Endothelial cell of umbilical vein (primary cell): ENCODE measurements at regions of chr11 and their contacts with region 1.

Region 1: DNA sequence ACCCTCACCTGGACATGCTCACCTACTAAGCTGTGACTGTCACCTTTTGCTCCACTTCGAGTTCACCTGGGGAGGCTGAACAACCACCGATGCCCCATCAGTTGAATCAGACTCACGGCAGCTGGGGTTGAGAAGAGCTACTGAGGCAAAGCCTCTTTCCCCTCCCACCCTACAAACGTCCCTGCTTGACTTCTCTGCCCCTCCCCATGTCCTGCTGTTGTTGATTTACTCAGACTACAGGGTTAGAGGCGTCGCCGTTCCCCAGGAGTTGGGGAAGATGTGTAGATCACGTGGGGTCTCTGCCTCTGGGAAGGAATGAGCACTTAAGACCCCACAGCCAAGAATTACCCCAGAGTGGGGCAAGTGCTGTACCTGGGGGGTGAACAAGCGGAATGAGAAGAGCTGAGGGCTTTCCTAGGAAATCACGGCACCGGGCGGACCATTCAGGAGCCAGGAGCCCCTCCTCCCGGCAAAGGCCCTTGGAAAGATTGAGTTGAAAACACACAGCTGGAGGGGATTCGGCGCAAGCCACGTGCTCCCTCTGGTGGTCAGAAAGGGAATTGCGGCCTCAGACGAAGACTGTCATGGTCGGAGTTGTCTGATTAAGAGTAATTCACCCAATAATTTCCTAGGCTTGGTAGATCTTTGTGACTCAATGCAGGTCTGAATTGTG is 7.0 kb downstream of the FXYD2 start:
- DNase-seq: peak; percentile 88
- H3K4me3 ChIP-seq: no peak overlapping the region
- H3K27ac ChIP-seq: peak overlapping the region; percentile 65
- H3K4me1 ChIP-seq: peaks cover 15% of the 10 kb centered on the region
- H3K27me3 ChIP-seq: peaks cover 0 to 1% of the 10 kb centered on the region in 2 experiments
- CTCF ChIP-seq: peak; percentile 98 to 99
- POLR2A ChIP-seq: no peak

Region 2: DNA sequence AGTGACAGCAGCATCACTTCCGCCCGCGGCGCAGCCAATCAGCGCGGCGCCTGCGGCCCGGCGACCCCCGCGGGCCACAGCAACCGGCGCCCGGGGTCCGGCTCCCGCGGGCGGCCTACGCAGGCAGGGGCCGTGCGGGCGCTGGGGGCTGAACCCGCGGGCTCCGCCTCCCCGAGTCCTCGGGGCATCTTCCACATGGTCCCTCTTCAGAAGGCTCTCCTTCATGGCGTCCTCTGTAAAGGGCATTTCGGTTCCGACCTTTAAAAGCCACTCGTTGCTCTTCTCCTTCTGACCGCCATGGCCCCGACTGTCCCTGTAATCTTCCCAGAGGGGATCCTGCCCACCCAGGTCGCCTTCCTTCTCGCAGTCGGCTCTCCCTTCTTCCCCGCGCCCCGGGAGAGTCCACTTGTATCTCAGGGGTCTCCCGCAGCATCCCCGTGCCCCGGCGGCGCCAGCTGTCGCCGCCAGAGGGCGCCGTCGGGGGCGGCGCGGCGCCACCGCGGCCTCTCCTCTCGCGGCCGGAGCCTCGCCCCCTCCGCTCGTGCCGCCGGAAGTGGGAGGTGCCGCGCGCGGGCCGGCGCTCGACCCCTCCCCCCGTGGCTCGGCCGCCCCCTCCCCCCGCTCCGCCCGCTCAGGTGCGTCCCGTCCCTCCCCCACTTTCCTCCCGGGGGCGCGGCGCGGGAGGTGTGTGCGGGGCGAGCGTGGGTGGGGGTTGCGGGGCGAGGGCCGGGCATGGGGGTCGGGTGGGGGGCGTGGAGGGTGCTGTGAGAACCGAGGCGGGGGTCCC is 585.2 kb before region 1 on chr11 and contains the start of gene RNF214:
- CTCF ChIA-PET with region 1: interaction called, 3 read pairs
- POLR2A ChIA-PET with region 1: no interaction called
- dilution Hi-C with region 1: no loop called
- intact Hi-C with region 1: loop called (anchors 10 kb)
- DNase-seq: peak; percentile 79
- H3K4me3 ChIP-seq: peak within 1 kb of the TSS; percentile 82 to 97 (median 90)
- H3K27ac ChIP-seq: peak within 1 kb of the TSS; percentile 89
- H3K4me1 ChIP-seq: peaks cover 20% of the 10 kb centered on the region
- H3K27me3 ChIP-seq: no peaks in the 10 kb centered on the region
- CTCF ChIP-seq: peak; percentile 81 to 99
- POLR2A ChIP-seq: peak; percentile 49
- total RNA-seq, gene RNF214: 26.1 and 28.2 TPM in 2 replicates

Region 3: GRCh38 chr11:117387992-117388755 is 429.3 kb before region 1 on chr11:
- CTCF ChIA-PET with region 1: no interaction called
- POLR2A ChIA-PET with region 1: no interaction called
- dilution Hi-C with region 1: no loop called
- intact Hi-C with region 1: no loop called
- DNase-seq: no peak
- H3K4me3 ChIP-seq: no peak overlapping the region
- H3K27ac ChIP-seq: no peak overlapping the region
- H3K4me1 ChIP-seq: peaks cover 8% of the 10 kb centered on the region
- H3K27me3 ChIP-seq: no peaks in the 10 kb centered on the region
- CTCF ChIP-seq: no peak
- POLR2A ChIP-seq: no peak

Region 4: GRCh38 chr11:117443266-117444195 is 374.0 kb before region 1 on chr11:
- CTCF ChIA-PET with region 1: interaction called, 5 read pairs
- POLR2A ChIA-PET with region 1: no interaction called
- dilution Hi-C with region 1: no loop called
- intact Hi-C with region 1: loop called (anchors 1 kb)
- DNase-seq: no peak
- H3K4me3 ChIP-seq: no peak overlapping the region
- H3K27ac ChIP-seq: no peak overlapping the region
- H3K4me1 ChIP-seq: no peaks in the 10 kb centered on the region
- H3K27me3 ChIP-seq: peaks cover 0 to 4% of the 10 kb centered on the region in 2 experiments
- CTCF ChIP-seq: peak; percentile 17 to 36
- POLR2A ChIP-seq: no peak

Region 5: DNA sequence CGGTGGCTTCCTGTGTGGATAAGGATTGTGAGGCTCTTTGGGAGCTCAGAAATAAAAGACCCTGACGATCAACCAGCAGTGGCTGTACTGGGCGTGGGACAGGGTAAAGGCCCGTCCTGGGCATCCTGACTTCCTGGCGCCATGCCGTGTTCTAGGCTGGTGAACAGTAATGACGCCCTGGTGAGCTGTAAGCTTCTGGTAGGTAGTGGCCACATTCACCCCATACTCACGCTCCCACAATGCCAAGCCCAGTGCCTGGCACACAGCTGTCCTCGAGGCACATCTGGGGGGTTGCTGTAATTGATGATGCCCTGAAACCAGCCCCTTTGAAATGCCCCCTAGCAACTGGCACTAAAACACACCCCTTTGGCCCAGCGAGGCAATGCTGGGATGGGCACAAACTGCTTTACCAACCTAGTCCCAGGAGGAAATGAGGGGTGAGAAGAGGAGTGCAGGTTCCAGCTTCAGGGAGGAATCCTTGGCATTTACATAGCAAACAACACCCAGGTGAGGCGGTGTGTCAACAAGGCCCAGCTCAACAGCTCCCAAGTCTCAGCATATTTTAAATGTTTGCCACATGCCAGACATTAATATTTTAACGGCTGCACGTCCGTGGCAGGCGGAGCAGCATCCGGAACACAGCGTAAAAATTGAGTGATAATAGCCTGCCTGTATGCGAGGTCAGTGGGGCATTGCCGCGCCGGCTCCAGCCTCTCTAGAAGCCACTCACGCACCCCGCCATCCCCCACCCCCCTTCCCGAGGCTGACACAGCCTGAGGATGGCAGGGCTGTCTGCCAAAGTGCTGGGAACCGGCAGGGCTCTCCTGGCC is 99.8 kb before region 1 on chr11:
- CTCF ChIA-PET with region 1: no interaction called
- POLR2A ChIA-PET with region 1: no interaction called
- dilution Hi-C with region 1: no loop called
- intact Hi-C with region 1: no loop called
- DNase-seq: no peak
- H3K4me3 ChIP-seq: no peak overlapping the region
- H3K27ac ChIP-seq: no peak overlapping the region
- H3K4me1 ChIP-seq: no peaks in the 10 kb centered on the region
- H3K27me3 ChIP-seq: peaks cover 2% of the 10 kb centered on the region in 2 experiments
- CTCF ChIP-seq: no peak
- POLR2A ChIP-seq: no peak

Region 6: DNA sequence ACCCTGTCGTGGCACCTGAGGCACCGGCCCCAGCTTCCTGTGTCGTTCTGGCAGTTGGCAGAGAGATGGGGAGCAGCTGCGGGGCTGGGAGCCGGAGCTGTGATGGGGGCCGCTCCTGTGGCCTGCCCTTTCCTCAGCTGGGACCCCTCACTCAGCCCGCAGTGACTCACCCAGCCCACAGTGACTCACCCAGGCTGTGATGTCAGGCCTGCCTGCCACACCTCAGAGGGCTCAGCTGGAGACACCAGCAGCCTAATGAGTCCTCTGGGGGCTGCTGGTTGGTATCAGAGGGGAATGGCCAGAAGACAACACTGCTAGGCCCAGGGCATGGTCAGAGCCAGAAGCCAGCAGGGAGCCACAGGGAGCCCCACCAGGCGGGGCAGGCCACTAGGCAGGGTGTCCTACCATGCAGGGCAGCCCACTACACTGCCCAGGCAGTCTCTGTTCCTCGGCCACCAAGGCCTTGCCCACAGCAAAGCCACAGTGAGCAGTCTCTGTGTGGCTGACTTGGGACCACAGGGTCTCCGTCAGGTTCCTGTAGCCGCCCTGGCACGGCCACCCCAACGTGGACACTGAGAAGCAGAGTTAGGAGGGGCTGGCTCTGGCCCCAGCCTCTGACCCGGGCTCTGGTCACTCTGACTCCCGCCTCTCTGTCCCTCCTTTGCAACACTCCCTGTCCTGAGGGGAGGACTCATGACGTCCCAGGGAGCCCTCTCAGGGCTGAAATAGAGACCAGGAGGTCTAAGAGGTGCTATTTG is 11.3 kb after region 1 on chr11:
- CTCF ChIA-PET with region 1: interaction called, 16 read pairs
- POLR2A ChIA-PET with region 1: no interaction called
- dilution Hi-C with region 1: no loop called
- intact Hi-C with region 1: no loop called
- DNase-seq: peak; percentile 54
- H3K4me3 ChIP-seq: no peak overlapping the region
- H3K27ac ChIP-seq: peak overlapping the region; percentile 2
- H3K4me1 ChIP-seq: peaks cover 28% of the 10 kb centered on the region
- H3K27me3 ChIP-seq: no peaks in the 10 kb centered on the region
- CTCF ChIP-seq: no peak
- POLR2A ChIP-seq: no peak

Region 7: DNA sequence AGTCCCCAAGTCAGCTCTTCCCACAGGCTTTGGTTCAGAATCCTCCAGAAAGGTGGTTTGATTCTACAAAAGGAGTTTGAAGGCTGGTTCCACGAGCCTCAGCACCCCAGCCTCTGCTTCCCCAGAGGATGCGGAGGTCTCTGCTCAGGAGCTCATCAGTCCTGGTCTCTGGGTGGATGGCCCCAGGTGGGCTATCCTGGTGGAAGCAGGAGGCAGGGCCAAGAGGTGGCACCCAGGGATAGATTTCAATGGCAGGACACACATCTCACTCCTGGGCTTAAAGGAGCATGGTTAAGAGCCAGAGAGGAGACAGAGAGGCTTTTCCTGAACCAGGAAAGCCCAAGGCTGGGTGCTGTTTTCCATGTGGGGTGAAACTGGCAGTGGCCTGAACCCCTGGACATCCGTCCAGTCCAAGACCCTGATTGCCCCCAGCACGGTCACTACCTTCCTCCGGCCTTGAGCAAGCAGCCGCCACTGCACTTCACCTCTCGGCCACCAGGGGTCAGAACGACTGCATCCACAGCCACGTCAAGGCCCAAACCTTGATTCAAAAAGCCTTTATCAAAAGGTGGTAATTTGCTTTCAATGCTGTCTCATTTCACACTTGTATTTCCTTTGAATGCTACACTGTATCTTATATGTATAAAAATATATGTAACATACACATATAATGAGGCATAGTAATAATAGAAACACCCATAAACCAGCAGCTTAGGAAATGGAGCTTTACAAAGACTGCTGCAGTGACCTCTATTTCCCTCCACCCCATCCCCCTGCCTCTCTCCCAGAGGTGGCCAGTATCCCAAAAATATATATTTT is 26.4 kb after region 1 on chr11:
- CTCF ChIA-PET with region 1: interaction called, 5 read pairs
- POLR2A ChIA-PET with region 1: no interaction called
- dilution Hi-C with region 1: no loop called
- intact Hi-C with region 1: loop called (anchors 1 kb)
- DNase-seq: peak; percentile 69
- H3K4me3 ChIP-seq: no peak overlapping the region
- H3K27ac ChIP-seq: no peak overlapping the region
- H3K4me1 ChIP-seq: no peaks in the 10 kb centered on the region
- H3K27me3 ChIP-seq: peaks cover 0 to 2% of the 10 kb centered on the region in 2 experiments
- CTCF ChIP-seq: peak; percentile 92 to 95
- POLR2A ChIP-seq: no peak

Region 8: DNA sequence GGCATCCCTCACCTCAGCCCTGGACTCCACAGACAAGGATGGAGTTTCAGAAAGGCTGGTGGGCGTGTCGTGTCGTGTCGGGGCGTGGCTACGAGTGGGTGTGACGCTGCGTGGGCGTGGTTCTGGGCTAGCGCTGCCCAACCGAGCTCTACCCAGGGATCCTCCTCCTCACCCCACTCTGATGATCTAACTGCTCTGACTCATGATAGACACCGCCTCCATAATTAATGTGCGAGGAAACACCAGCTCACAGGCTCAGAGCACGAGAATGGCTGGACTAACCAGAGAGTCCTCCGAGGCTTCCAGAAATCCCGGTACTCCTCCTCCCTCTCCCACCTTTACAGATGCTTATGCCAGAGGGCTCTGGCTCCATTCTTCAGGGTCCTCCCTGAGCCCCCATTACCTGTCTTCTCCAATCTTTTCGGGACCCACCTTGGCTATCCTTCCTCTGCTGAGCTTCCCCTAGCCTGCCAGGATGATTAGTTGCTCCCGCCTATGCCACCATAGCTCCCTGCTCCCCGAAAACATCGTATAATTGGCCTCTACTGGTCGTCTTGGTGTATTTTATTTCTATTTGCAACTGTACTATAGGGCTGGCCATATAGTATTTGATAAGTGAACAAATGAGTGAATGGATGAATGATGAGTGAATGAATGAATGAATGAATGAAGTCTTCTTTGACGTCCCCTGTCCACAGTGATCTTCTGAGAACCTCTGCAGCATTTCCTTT is 89.9 kb after region 1 on chr11:
- CTCF ChIA-PET with region 1: interaction called, 34 read pairs
- POLR2A ChIA-PET with region 1: no interaction called
- dilution Hi-C with region 1: no loop called
- intact Hi-C with region 1: loop called (anchors 1 kb)
- DNase-seq: peak; percentile 94
- H3K4me3 ChIP-seq: no peak overlapping the region
- H3K27ac ChIP-seq: peak overlapping the region; percentile 49
- H3K4me1 ChIP-seq: peaks cover 5% of the 10 kb centered on the region
- H3K27me3 ChIP-seq: no peaks in the 10 kb centered on the region
- CTCF ChIP-seq: no peak
- POLR2A ChIP-seq: no peak

Region 9: GRCh38 chr11:118051611-118052461 is 234.3 kb after region 1 on chr11:
- CTCF ChIA-PET with region 1: interaction called, 139 read pairs
- POLR2A ChIA-PET with region 1: no interaction called
- dilution Hi-C with region 1: no loop called
- intact Hi-C with region 1: loop called (anchors 1 kb)
- DNase-seq: no peak
- H3K4me3 ChIP-seq: no peak overlapping the region
- H3K27ac ChIP-seq: no peak overlapping the region
- H3K4me1 ChIP-seq: no peaks in the 10 kb centered on the region
- H3K27me3 ChIP-seq: peaks cover 5 to 7% of the 10 kb centered on the region in 2 experiments
- CTCF ChIP-seq: no peak
- POLR2A ChIP-seq: no peak